Calu3 (cell line): ENCODE measurements at regions of chr7 and their contacts with region 1.

Region 1: DNA sequence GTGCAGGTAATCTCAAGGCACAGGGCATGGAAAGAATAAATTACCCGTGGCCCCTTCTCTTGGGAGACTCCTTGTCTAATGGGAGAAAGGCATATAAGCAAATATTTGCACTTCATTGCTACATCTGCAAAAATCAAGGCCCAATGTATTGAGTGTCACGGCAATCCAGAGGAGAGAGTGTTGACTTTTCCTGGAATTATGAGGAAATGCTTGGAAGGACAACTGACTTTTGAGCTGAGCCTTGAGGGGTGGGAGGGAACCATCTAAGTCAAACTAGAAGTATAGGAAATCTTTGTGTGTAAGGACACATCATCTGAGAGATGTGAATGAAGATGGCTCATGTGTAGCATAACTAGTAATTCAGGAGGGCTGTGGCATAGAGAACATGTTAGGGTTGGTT is 64.9 kb upstream of the CTTNBP2 start:
- DNase-seq: no peak
- H3K4me3 Mint-ChIP-seq: peak overlapping the region; percentile 20
- H3K27ac Mint-ChIP-seq: peak overlapping the region; percentile 66
- H3K4me1 Mint-ChIP-seq: peaks cover 32% of the 10 kb centered on the region
- H3K27me3 Mint-ChIP-seq: no peaks in the 10 kb centered on the region
- CTCF ChIP-seq: no peak

Region 2: DNA sequence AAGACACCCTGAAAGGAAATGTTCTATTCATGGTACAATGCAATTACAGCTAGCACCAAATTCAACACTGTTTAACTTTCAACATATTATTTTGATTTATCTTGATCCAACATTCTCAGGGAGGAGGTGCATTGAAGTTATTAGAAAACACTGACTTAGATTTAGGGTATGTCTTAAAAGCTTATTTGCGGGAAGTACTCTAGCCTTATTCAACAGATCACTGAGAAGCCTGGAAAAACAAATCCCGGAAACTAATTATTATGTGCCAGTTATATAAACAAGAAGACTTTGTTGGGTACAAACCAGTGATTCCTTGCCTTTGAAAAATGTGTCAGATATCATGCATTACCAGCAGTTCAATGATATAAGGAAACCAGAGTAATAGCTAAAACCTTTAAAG is 298.2 kb before region 1 on chr7:
- CTCF ChIA-PET with region 1: no interaction called
- intact Hi-C with region 1: no loop called
- DNase-seq: no peak
- H3K4me3 Mint-ChIP-seq: no peak overlapping the region
- H3K27ac Mint-ChIP-seq: peak overlapping the region; percentile 54
- H3K4me1 Mint-ChIP-seq: peaks cover 28% of the 10 kb centered on the region
- H3K27me3 Mint-ChIP-seq: no peaks in the 10 kb centered on the region
- CTCF ChIP-seq: no peak

Region 3: GRCh38 chr7:117949232-117949631 is 11.1 kb after region 1 on chr7:
- CTCF ChIA-PET with region 1: interaction called, 12 read pairs
- intact Hi-C with region 1: no loop called
- DNase-seq: peak; percentile 45
- H3K4me3 Mint-ChIP-seq: no peak overlapping the region
- H3K27ac Mint-ChIP-seq: no peak overlapping the region
- H3K4me1 Mint-ChIP-seq: peaks cover 58% of the 10 kb centered on the region
- H3K27me3 Mint-ChIP-seq: no peaks in the 10 kb centered on the region
- CTCF ChIP-seq: peak; percentile 31

Region 4: DNA sequence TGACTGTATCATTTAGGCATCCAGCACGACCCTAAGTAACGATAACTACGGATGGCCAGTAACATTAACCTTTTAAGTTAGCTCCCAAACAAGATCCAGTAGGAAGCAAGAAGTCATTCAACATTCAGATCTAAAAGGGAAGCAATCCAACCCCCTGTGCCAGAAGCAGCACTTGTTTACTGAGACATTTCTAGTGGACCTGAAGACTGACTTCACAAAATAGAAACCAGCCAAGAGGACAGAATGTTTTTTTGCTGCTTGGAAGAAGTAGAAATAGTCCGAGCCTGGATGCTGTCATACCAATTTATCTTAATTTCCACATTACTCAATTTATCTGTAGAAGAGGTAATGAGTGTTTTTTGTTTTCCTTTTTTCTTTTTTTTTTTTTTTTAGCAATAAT is 23.1 kb after region 1 on chr7:
- CTCF ChIA-PET with region 1: no interaction called
- intact Hi-C with region 1: no loop called
- DNase-seq: no peak
- H3K4me3 Mint-ChIP-seq: no peak overlapping the region
- H3K27ac Mint-ChIP-seq: no peak overlapping the region
- H3K4me1 Mint-ChIP-seq: no peaks in the 10 kb centered on the region
- H3K27me3 Mint-ChIP-seq: no peaks in the 10 kb centered on the region
- CTCF ChIP-seq: no peak

Region 5: DNA sequence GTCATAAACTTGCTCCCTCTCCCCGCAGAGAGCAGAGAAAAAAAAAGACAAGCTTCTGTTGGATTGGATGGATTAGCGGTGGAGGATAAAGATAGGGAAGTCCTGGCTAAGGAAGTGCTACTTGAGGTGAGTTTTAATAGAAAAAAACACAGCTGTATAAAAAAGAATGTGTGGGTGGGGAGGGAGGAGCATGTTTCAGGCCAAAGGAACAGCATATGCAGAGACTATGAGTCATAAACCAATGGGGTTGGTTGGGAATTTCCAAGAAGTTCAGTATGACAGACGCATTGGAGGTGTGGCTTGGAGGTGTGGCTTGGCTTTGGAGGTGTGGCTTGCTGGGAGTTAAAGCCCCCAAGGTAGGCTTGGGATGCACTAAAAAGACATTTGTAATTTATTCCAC is 142.8 kb after region 1 on chr7:
- CTCF ChIA-PET with region 1: no interaction called
- intact Hi-C with region 1: no loop called
- DNase-seq: peak; percentile 66
- H3K4me3 Mint-ChIP-seq: peak overlapping the region; percentile 42
- H3K27ac Mint-ChIP-seq: peak overlapping the region; percentile 57
- H3K4me1 Mint-ChIP-seq: peaks cover 12% of the 10 kb centered on the region
- H3K27me3 Mint-ChIP-seq: no peaks in the 10 kb centered on the region
- CTCF ChIP-seq: no peak

Region 6: GRCh38 chr7:118114175-118114574 is 176.0 kb after region 1 on chr7:
- CTCF ChIA-PET with region 1: no interaction called
- intact Hi-C with region 1: no loop called
- DNase-seq: no peak
- H3K4me3 Mint-ChIP-seq: no peak overlapping the region
- H3K27ac Mint-ChIP-seq: no peak overlapping the region
- H3K4me1 Mint-ChIP-seq: peaks cover 5% of the 10 kb centered on the region
- H3K27me3 Mint-ChIP-seq: peaks cover 11% of the 10 kb centered on the region
- CTCF ChIP-seq: no peak